Colonic mucosa (tissue), 4 donors: ENCODE measurements at regions of chr20 and their contacts with region 1.

Region 1: GRCh38 chr20:58980700-58981627 is at the start of gene NELFCD:
- DNase-seq: peak; percentile 92
- H3K4me3 ChIP-seq: peak within 1 kb of the TSS; percentile 58
- H3K27ac ChIP-seq: peak within 1 kb of the TSS; percentile 62
- H3K4me1 ChIP-seq: no peaks in the 10 kb centered on the region
- H3K27me3 ChIP-seq: no peaks in the 10 kb centered on the region
- CTCF ChIP-seq: no peak
- total RNA-seq, gene NELFCD: 47.1 to 64.4 TPM

Region 2: GRCh38 chr20:58900399-58900798 is 80.6 kb before region 1 on chr20:
- intact Hi-C with region 1: loop called (anchors 5 kb)
- DNase-seq: no peak
- H3K4me3 ChIP-seq: no peak overlapping the region
- H3K27ac ChIP-seq: no peak overlapping the region
- H3K4me1 ChIP-seq: no peaks in the 10 kb centered on the region
- H3K27me3 ChIP-seq: no peaks in the 10 kb centered on the region
- CTCF ChIP-seq: no peak

Region 3: GRCh38 chr20:59125836-59126235 is 144.9 kb after region 1 on chr20:
- intact Hi-C with region 1: no loop called
- DNase-seq: no peak
- H3K4me3 ChIP-seq: no peak overlapping the region
- H3K27ac ChIP-seq: no peak overlapping the region
- H3K4me1 ChIP-seq: no peaks in the 10 kb centered on the region
- H3K27me3 ChIP-seq: no peaks in the 10 kb centered on the region
- CTCF ChIP-seq: no peak